PC-3 (cell line): ENCODE measurements at regions of chr13 and their contacts with region 1.

Region 1: DNA sequence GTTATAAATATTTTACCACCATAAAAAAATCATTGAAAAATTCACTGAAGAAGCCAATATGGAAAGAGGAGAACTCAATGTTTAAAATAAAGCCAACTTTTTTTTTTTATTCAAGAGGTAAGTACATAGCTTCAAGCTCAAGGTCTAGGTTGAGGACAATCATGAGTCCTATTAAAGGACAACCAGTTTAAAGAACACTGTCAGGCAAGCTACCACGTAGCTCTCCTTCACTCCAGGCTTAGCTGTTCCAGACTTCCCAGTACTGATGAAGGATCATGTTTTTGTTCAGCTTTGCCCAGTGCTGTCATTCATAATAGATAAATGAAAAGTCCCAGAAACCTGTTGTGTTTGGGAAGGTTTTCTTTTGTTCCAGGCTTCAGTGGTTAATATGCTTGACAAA is 10.0 kb upstream of the MLNR start:
- DNase-seq: no peak
- ATAC-seq: no peak
- H3K4me3 ChIP-seq: no peak overlapping the region
- H3K27ac ChIP-seq: no peak overlapping the region
- H3K4me1 ChIP-seq: no peaks in the 10 kb centered on the region
- H3K27me3 ChIP-seq: no peaks in the 10 kb centered on the region
- CTCF ChIP-seq: no peak

Region 2: GRCh38 chr13:48370815-48371214 is 839.3 kb before region 1 on chr13:
- CTCF ChIA-PET with region 1: no interaction called
- POLR2A ChIA-PET with region 1: no interaction called
- intact Hi-C with region 1: no loop called
- DNase-seq: no peak
- ATAC-seq: no peak
- H3K4me3 ChIP-seq: no peak overlapping the region
- H3K27ac ChIP-seq: no peak overlapping the region
- H3K4me1 ChIP-seq: no peaks in the 10 kb centered on the region
- H3K27me3 ChIP-seq: no peaks in the 10 kb centered on the region
- CTCF ChIP-seq: no peak

Region 3: DNA sequence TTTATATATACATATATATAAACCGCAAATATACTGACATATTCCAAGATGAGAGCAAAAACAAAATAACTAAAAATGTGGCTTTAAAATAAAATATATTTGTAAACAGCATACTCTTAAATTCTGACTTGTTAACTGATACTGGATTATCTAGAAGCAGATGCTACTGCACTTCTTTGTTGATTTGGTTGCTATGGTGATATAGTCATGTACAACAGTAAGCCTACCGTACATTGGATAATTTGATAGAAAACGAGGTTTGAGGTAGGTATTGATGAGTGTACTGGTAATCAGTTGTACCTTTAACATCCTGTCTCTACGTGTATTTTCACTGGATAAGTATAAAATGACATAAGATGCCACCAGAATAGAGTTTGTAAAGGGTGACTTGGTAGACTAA is 177.0 kb before region 1 on chr13:
- CTCF ChIA-PET with region 1: no interaction called
- POLR2A ChIA-PET with region 1: interaction called, 15 read pairs
- intact Hi-C with region 1: no loop called
- DNase-seq: no peak
- ATAC-seq: no peak
- H3K4me3 ChIP-seq: no peak overlapping the region
- H3K27ac ChIP-seq: no peak overlapping the region
- H3K4me1 ChIP-seq: no peaks in the 10 kb centered on the region
- H3K27me3 ChIP-seq: no peaks in the 10 kb centered on the region
- CTCF ChIP-seq: no peak

Region 4: GRCh38 chr13:49108196-49108595 is 101.9 kb before region 1 on chr13:
- CTCF ChIA-PET with region 1: no interaction called
- POLR2A ChIA-PET with region 1: no interaction called
- intact Hi-C with region 1: no loop called
- DNase-seq: no peak
- ATAC-seq: no peak
- H3K4me3 ChIP-seq: no peak overlapping the region
- H3K27ac ChIP-seq: no peak overlapping the region
- H3K4me1 ChIP-seq: peaks cover 9% of the 10 kb centered on the region
- H3K27me3 ChIP-seq: no peaks in the 10 kb centered on the region
- CTCF ChIP-seq: no peak